PC-9 (cell line): ENCODE measurements at regions of chr12 and their contacts with region 1.

Region 1: DNA sequence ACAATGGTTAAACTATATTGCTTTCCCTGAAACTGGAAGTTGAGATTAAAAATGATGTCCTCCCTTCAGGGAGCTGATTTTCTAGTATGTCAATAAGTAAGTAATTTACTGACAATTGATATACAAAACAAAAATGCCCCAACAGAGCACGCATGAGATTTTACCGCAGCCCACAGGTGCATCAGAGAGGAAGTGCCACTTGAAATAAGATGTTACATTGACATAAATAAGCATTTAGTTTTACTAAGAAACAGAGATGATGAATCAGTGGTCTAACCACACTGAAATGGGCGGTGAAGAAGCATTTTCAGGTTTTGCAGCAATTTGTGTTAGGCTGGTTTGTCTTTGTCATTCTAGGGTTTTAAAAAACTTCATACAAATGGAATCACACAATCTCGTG is 8.8 kb upstream of the CLECL1 start:
- DNase-seq: no peak
- H3K4me3 ChIP-seq: no peak overlapping the region
- H3K27ac ChIP-seq: no peak overlapping the region
- H3K4me1 ChIP-seq: peaks cover 27% of the 10 kb centered on the region
- H3K27me3 ChIP-seq: no peaks in the 10 kb centered on the region
- CTCF ChIP-seq: no peak

Region 2: DNA sequence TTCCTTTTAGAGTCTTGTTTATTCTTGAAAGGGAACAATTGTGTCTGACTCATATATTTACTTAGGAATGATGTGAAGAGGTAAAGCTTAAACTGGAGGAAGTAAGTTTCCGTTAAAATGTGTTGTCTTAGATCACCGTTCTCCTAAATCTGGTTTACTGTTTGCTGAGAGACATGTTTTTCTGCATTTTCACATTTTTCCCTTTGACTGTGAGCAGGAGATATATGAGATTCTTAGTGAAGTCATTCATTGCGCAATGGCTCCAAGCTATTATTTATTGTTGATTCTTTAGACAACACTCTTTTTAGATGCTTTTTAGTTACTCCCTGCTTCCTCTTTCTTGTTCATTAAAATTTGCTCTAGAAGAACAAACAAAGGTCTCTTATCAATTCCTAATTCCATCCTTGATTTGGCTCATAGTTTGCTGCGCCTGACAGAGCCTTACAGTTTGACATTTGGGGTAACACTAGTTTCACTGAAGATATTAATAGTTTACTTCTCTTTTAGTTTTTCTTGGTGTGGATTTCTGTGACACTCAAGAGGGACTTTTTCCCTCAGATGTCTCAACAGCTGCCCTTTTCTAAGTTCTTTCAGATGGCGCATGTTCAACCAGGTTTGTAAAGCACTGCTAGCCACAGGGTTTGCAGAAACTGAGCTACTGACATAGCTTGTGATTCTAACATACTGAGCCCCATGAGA is 20.2 kb before region 1 on chr12:
- CTCF ChIA-PET with region 1: interaction called, 11 read pairs
- POLR2A ChIA-PET with region 1: no interaction called
- intact Hi-C with region 1: loop called (anchors 1 kb)
- DNase-seq: peak in 1 of 2 experiments; percentile 90
- H3K4me3 ChIP-seq: no peak overlapping the region
- H3K27ac ChIP-seq: peak overlapping the region; percentile 69
- H3K4me1 ChIP-seq: peaks cover 25% of the 10 kb centered on the region
- H3K27me3 ChIP-seq: no peaks in the 10 kb centered on the region
- CTCF ChIP-seq: no peak

Region 3: DNA sequence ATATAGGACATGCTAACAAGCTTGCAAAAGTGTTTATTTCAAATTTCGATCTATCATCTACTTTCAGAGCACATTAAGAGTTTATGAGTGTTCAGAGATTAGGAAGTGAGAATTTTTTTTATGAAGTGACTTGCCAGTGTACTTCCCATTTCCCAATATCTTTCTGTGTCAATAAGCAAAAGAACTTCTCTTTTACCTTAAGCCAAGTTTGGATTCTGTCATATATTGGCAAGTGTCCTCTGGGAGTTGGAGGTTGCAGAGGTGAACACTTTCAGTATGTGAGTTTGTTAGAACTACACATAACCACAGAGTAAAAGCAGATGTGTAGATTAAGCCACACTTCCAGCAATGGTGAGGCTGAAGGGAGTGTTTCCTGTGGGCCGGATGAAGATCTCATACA is 68.9 kb after region 1 on chr12:
- CTCF ChIA-PET with region 1: no interaction called
- POLR2A ChIA-PET with region 1: no interaction called
- intact Hi-C with region 1: no loop called
- DNase-seq: no peak
- H3K4me3 ChIP-seq: no peak overlapping the region
- H3K27ac ChIP-seq: no peak overlapping the region
- H3K4me1 ChIP-seq: no peaks in the 10 kb centered on the region
- H3K27me3 ChIP-seq: no peaks in the 10 kb centered on the region
- CTCF ChIP-seq: no peak

Region 4: DNA sequence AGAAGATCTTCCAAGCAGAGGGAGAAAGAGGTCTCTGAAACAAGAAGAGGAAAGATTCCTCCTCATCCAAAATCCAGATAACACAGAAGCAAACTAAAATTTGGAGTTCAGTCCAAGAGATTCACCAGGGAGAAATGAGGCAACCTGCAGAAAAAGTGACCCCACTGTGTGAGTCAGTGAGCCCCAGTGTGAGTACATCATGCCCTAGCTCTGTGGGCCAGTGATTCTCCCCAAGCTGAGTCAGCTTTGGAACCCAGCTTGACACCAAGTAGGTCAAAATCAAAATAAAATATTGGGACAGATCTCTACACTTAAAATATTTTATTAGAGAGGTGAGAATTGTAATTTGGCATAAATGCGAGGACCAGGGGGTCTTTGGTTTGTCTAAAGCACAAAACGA is 110.2 kb after region 1 on chr12:
- CTCF ChIA-PET with region 1: no interaction called
- POLR2A ChIA-PET with region 1: no interaction called
- intact Hi-C with region 1: no loop called
- DNase-seq: no peak
- H3K4me3 ChIP-seq: no peak overlapping the region
- H3K27ac ChIP-seq: no peak overlapping the region
- H3K4me1 ChIP-seq: no peaks in the 10 kb centered on the region
- H3K27me3 ChIP-seq: no peaks in the 10 kb centered on the region
- CTCF ChIP-seq: no peak